Activated T-helper 1 cell treated with anti-CD3 and anti-CD28 coated beads, Interleukin-12 subunit alpha, Interleukin-12 subunit beta, Interleukin-2, Interleukin-4 antibody, amounts not matched to agents 30 ng/mL and 10 ng/mL and 1 ng/mL, durations not matched to agents 14 hours and 24 hours and 36 hours (primary cell): ENCODE measurements at regions of chr17 and their contacts with region 1.

Region 1: DNA sequence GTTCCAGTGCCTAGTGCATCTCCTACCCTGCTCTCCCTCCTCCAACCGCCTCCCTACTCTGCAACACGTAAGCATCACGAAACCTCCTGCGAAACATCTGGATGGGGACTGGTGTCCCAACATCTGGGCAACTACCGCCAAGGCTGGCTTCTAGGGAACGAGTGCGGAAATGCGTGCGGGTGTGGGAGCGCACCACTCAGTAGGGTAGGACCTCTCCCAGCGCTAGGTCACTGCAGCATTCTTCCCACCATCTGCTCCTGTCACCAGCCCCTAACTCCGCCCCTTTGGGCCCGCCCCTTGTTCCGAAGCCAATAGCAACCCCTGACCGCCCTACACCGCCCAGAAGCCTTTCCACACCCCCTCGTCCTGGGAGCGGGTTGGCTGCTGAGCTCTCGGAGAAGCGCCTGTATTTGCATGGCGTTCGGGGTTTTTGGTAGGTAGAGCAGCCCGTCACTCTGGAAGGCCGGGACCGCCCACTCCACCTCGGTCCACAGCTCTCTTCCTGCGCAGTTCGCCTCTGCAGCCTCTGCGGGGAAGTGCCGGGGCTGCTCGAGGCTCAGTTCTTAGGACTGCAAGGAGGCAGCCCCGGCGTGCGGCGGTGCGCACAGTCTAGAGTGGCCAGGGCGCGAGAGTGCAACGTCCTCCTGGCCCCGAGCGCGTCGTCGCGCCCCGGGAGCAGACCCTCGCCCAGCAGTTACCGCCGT is at the start of gene HS3ST3B1:
- DNase-seq: peak; percentile 100
- H3K4me3 Mint-ChIP-seq: peak within 1 kb of the TSS; percentile 93
- H3K27ac Mint-ChIP-seq: peak within 1 kb of the TSS; percentile 98
- H3K4me1 Mint-ChIP-seq: peaks cover 66% of the 10 kb centered on the region
- H3K27me3 Mint-ChIP-seq: peaks cover 20% of the 10 kb centered on the region
- total RNA-seq, gene HS3ST3B1: 32.3 and 33.8 TPM in 2 replicates

Region 2: DNA sequence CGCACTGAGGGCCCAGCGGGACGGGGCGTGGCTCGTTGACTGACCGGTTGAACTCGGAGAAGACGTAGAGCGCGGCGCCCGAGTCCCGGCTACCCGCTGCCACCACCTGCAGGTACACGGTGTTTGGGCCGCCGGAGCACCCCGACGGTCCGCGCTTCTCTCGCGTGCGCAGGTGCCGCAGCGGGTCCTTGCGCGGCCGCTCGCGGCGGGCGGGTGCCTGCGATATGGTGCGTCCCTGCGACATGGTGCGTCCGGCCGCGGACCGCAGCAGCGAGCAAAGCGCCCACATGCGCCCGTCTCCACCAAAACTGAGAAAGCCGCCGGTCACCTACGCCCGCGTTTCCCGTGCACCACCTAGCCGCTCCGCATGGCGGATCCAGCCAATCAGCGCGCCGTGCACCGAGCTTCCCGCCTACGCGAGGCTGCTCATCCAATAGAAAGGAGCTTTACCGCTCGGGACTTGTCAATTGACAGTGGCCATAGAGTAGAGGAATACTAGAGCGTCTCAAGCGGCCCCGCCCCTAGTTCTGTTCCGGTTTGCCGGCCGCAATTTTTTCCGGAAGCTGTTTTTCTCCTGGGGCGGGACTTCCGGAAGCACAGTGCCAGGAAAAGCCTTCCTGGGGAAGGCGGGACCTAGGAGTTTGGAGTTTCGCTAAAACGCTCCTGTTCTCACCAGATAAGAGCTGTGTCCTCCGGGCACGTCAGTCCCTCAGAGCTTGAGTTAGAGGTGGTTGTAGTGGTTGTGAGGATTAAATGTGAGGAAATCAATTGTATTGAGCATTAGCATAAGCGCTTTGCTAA is 1282.9 kb before region 1 on chr17 and contains the start of gene ELAC2:
- intact Hi-C with region 1: loop called (anchors 2 kb)
- DNase-seq: peak; percentile 97
- H3K4me3 Mint-ChIP-seq: peak within 1 kb of the TSS; percentile 96
- H3K27ac Mint-ChIP-seq: peak within 1 kb of the TSS; percentile 96
- H3K4me1 Mint-ChIP-seq: peaks cover 42% of the 10 kb centered on the region
- H3K27me3 Mint-ChIP-seq: no peaks in the 10 kb centered on the region
- total RNA-seq, gene ELAC2: 96.9 and 98.7 TPM in 2 replicates

Region 3: GRCh38 chr17:13759518-13760335 is 541.0 kb before region 1 on chr17:
- intact Hi-C with region 1: loop called (anchors 5 kb)
- DNase-seq: no peak
- H3K4me3 Mint-ChIP-seq: no peak overlapping the region
- H3K27ac Mint-ChIP-seq: no peak overlapping the region
- H3K4me1 Mint-ChIP-seq: no peaks in the 10 kb centered on the region
- H3K27me3 Mint-ChIP-seq: no peaks in the 10 kb centered on the region

Region 4: DNA sequence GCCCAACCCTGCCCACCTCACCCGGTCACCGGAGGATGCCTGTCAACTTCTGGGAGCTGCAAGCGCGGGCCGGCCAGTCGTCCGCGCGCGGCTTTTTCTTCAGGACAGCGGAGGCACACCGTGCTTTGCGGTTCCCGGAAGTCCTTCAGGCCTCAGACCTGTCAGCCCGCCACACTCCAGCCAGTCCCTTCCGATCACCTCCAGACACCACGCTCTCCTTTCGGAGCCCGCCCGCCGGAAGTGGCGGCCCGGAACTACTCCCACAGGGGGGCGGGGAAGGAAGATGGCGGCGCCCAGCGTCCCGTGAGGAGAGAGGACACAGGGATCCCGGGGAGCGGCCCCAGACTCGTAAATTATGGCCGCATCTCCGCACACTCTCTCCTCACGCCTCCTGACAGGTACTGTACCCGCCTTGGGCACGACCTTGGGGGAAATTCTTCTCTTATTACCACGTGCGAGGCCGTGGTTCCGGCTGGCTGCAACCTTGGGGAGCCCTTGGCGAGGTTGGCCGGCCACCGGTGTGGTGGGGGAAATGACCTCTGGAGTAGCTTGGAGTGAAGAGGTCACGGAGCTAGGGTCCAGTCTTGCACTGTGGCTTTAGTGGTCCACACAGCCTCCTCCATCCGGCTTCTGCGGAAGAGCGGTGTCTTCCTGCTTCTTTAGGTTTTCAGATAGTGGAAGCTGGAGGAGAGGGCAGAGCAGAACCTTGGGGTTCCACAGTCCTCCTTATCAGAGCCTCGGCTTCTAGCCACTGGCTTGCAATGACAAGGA is 231.3 kb before region 1 on chr17 and contains the start of gene COX10:
- intact Hi-C with region 1: loop called (anchors 1 kb)
- DNase-seq: peak; percentile 85
- H3K4me3 Mint-ChIP-seq: peak within 1 kb of the TSS; percentile 97
- H3K27ac Mint-ChIP-seq: peak within 1 kb of the TSS; percentile 94
- H3K4me1 Mint-ChIP-seq: peaks cover 78% of the 10 kb centered on the region
- H3K27me3 Mint-ChIP-seq: no peaks in the 10 kb centered on the region
- total RNA-seq, gene COX10: 40.1 and 41.7 TPM in 2 replicates

Region 5: GRCh38 chr17:14316150-14316785 is 15.5 kb after region 1 on chr17:
- intact Hi-C with region 1: no loop called
- DNase-seq: no peak
- H3K4me3 Mint-ChIP-seq: no peak overlapping the region
- H3K27ac Mint-ChIP-seq: peak overlapping the region; percentile 13
- H3K4me1 Mint-ChIP-seq: peaks cover 62% of the 10 kb centered on the region
- H3K27me3 Mint-ChIP-seq: no peaks in the 10 kb centered on the region

Region 6: GRCh38 chr17:14337596-14338079 is 36.9 kb after region 1 on chr17:
- intact Hi-C with region 1: loop called (anchors 2 kb)
- DNase-seq: no peak
- H3K4me3 Mint-ChIP-seq: peak overlapping the region; percentile 69
- H3K27ac Mint-ChIP-seq: peak overlapping the region; percentile 89
- H3K4me1 Mint-ChIP-seq: peaks cover 61% of the 10 kb centered on the region
- H3K27me3 Mint-ChIP-seq: no peaks in the 10 kb centered on the region

Region 7: DNA sequence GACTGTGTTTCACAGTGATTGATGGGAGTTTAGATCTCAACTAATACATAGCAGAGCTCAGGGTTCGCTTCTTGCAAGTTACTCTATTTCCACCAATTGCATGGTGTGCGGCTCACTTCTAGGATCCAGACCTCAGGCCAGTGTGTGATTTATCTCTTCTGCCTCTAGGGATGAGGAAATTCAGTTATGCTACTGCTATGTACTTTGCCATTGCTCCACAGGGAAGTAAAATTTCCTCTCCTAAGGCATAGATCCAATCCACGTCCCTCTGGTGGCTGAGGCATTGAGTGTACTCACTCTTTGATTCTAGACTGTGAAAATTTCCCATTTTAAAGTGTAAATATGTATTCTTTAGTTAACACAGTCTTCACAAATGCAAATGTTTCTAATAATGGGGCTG is 214.3 kb after region 1 on chr17:
- intact Hi-C with region 1: no loop called
- DNase-seq: no peak
- H3K4me3 Mint-ChIP-seq: no peak overlapping the region
- H3K27ac Mint-ChIP-seq: no peak overlapping the region
- H3K4me1 Mint-ChIP-seq: no peaks in the 10 kb centered on the region
- H3K27me3 Mint-ChIP-seq: no peaks in the 10 kb centered on the region

Region 8: GRCh38 chr17:14641117-14641516 is 340.4 kb after region 1 on chr17:
- intact Hi-C with region 1: no loop called
- DNase-seq: no peak
- H3K4me3 Mint-ChIP-seq: no peak overlapping the region
- H3K27ac Mint-ChIP-seq: no peak overlapping the region
- H3K4me1 Mint-ChIP-seq: no peaks in the 10 kb centered on the region
- H3K27me3 Mint-ChIP-seq: no peaks in the 10 kb centered on the region

Region 9: DNA sequence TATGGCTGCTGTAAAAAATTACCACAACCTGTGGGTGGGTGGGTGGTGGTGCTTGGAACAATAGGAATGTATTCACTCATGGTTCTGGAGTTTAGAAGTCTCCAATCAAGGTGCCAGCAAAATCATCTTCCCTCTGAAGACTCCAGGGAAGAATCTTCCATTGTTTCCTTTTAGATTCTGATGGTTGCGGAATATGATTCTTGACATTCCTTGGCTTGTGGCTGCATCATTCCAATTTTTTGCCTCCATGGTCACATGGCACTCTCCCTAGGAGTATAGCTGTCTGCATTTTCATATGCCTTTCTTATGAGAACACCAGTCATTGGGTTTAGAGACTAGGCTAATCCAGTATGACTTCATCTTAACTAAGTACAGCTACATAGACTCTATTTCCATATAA is 401.2 kb after region 1 on chr17:
- intact Hi-C with region 1: no loop called
- DNase-seq: no peak
- H3K4me3 Mint-ChIP-seq: no peak overlapping the region
- H3K27ac Mint-ChIP-seq: no peak overlapping the region
- H3K4me1 Mint-ChIP-seq: no peaks in the 10 kb centered on the region
- H3K27me3 Mint-ChIP-seq: no peaks in the 10 kb centered on the region

Region 10: GRCh38 chr17:14926526-14927122 is 625.9 kb after region 1 on chr17:
- intact Hi-C with region 1: loop called (anchors 1 kb)
- DNase-seq: peak; percentile 31
- H3K4me3 Mint-ChIP-seq: no peak overlapping the region
- H3K27ac Mint-ChIP-seq: no peak overlapping the region
- H3K4me1 Mint-ChIP-seq: no peaks in the 10 kb centered on the region
- H3K27me3 Mint-ChIP-seq: no peaks in the 10 kb centered on the region